ENCODE measurements at regions of chr1 and their contacts with region 1.

Region 1: DNA sequence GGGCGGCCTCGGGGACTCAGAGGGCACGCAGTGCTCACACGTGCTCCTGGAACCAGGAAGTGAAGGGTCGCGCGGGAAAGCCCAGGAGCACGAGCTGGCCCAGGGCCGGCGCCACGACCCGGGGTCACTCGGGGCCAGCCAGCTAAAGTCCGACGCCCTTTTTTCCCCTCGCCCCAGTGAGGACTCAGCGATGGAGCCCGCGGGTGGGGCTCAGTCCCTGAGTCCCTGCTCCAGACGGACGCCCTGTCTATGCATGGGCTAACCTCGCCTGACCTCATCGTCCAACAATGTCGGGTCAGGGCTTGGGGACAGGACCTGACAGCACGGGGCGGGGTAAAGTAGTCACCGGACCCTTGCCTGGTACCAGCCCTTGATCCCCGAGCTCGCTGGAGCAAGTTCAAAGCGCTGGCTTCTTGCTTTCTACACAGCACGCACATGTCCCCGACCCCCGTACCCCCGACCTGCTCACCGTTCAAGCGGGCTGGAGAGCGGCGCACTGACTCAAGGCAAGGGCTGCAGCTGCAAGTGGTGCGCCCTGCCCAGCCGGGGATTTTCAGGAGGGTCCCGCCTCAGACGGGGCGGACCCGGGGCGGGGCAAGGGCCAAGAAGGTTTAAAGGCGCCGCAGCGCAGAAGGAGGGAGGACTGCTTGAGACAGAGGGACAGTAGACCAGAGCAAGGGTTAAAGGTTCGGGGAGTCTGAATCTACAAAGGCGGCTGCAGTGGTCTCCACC is at the start of gene TAGLN2:
- DNase-seq: peak; percentile 87 to 92
- H3K4me3 ChIP-seq: peak within 1 kb of the TSS; percentile 93
- H3K27ac ChIP-seq: peak within 1 kb of the TSS; percentile 93
- H3K4me1 ChIP-seq: peaks cover 48% of the 10 kb centered on the region
- H3K27me3 ChIP-seq: no peaks in the 10 kb centered on the region
- CTCF ChIP-seq: no peak
- total RNA-seq, gene TAGLN2: 473 and 481 TPM in 2 replicates

Region 2: DNA sequence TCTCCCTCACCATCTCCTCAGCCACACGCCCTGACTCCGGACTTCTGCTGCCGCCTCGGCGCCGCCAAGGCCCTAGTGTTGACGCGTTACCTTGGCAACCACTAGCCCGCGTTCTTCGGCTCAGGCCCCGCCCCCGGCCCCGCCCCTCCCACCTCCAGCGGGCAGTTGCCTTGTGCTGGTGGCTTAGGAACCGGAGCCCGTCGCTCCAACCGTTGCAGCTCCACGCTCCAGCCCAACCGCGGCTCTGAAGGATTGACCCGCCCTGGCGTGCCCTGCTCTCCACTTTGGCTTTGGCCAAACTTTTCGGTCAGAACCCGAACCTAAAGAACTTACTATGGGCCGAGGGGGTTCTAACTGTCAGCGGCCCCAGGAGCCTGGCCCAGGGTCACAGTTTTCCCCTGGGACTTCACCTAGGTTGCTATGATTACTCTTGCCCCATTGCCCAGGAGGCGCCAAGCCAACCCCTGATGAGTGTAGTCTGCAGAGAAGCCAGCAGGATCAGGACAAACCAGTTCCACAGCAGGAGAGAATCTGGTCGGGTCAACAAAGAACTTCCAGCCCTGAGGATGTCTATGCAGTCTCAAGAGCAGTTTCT is 25.0 kb before region 1 on chr1 and contains the start of gene CFAP45:
- CTCF ChIA-PET with region 1: no interaction called
- POLR2A ChIA-PET with region 1: interaction called, 7 read pairs
- intact Hi-C with region 1: loop called (anchors 1 kb)
- DNase-seq: peak; percentile 87 to 94
- H3K4me3 ChIP-seq: peak within 1 kb of the TSS; percentile 53; the same call in 1 of the 2 replicates
- H3K27ac ChIP-seq: peak within 1 kb of the TSS; percentile 88
- H3K4me1 ChIP-seq: peaks cover 36% of the 10 kb centered on the region
- H3K27me3 ChIP-seq: no peaks in the 10 kb centered on the region
- CTCF ChIP-seq: no peak
- total RNA-seq, gene CFAP45: 8.2 and 9.3 TPM in 2 replicates

Region 3: GRCh38 chr1:159945483-159946241 is 20.5 kb after region 1 on chr1 and contains the start of gene IGSF9:
- CTCF ChIA-PET with region 1: interaction called, 3 read pairs
- POLR2A ChIA-PET with region 1: interaction called, 5 read pairs
- intact Hi-C with region 1: loop called (anchors 1 kb)
- DNase-seq: peak; percentile 90 to 94
- H3K4me3 ChIP-seq: peak within 1 kb of the TSS; percentile 76
- H3K27ac ChIP-seq: peak within 1 kb of the TSS; percentile 53
- H3K4me1 ChIP-seq: peaks cover 40% of the 10 kb centered on the region
- H3K27me3 ChIP-seq: no peaks in the 10 kb centered on the region
- CTCF ChIP-seq: peak; percentile 61
- total RNA-seq, gene IGSF9: 22.9 and 23.4 TPM in 2 replicates